GM10248 (cell line): ENCODE measurements at regions of chr11 and their contacts with region 1.

Region 1: DNA sequence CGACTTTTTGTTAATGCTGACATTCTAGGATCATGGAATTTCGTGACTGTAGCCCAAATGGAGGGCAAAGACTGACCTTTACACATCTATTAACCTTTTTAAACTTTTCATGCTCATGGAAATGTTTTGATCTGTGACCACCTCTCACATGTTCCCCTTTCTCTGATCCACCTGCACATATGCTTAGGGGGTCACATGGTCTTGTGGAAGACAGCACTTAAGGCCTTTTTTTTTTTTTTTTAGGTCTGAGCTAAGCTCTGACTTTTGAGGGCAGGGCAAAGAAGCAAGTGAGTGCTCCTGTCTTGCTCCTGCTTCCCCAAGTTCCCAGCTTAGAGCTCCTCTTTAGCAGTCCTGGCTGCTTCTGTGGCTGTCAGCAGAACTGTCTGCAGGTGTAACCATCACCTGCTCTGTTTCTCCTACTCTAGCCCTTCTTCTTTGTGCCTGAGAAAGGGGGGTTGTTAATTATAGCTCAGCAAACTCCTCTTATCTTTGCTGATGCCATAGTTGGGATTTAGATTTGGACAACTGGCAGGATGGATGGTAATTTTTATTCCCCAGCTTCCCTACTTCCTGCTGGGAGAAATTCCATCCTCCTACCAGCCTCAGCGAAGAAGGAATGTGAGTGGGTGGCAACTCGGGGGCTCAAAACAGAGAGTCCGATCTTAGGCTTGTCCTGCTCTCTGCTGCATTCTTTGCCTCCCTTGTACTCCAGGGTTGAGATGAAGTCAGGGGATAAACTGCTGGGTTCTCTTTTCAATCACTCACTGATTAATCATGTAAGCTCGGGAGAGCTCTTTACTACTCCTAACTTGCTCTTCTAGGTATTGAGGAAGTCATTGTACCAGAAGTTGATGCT is 64.4 kb downstream of the GRAMD1B start:
- DNase-seq: no peak
- CTCF ChIP-seq: no peak

Region 2: DNA sequence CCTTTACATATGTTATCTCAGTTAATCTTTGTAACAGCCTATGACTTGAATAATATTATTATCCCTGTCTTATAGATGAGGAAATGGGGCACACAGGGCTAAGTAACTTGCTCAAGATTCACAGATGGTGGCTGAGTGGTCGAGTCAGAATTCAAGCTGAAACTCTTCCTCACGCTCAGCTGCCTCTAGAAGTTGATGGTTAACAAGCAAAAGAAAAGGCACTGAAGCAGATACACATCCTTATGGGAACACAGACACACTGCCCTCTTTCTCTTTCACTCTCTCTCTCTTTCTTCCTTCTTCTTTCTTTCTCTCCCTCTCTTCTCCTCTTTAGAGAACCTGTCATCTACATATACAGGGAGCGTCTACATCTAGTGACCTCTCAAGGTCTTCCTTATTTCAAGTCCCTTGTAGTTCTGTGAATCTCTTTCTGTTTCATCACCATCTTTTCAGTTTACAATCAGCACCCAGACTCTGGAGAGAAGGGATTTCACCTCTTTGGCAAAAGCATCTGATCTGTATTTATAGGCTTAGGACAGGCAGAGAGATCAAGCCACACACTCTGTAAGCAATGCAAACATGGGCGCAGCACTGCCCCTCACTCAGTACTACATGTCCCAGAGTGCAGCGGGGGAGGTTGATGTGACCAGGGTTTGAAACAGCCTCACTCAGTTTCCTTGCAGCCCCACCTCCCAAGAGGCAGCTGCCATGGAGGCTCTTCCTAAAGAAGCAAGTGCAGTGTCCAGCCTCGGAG is 11.3 kb after region 1 on chr11:
- CTCF ChIA-PET with region 1: interaction called, 28 read pairs
- POLR2A ChIA-PET with region 1: no interaction called
- DNase-seq: no peak
- CTCF ChIP-seq: no peak

Region 3: DNA sequence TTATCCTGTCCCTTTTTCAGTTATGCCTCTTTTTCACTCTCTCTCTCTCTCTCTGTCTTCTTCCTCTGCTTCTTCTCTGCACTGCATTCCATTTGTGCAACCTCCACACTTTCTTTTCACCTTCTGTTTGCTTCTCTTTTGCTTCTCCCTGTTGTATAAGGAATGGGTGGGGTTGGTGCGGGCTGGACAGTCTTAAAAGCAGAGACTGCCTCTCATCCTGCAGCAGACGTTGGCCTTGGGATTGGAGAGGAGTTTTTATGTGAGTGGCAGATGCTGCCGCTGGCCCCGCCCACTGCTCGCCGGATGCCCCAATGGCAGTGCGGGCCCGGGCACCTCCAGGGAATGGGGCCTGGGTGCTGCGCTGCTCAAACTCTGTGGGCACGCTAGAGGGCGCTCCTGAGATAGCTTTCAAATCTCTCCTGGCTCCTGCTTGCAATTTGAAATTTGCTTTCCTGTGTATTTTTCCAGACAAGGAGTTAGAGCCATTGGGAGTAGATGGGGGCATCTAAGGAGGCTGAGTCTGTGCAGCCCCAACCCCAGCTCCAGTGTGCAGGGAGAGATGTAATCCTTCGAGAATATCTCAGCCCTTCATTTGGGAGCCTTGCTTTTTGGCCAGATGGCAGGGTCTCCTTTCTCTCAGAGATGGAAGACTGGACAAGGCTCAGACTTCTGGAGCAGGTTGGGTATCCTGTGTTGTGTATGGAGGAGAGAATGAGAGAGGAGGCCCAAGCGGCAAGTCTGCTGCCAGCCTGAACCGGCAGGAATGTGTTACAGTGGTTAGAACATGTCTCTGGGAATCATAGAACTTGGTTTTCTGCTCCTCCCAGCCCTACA is 16.8 kb after region 1 on chr11:
- CTCF ChIA-PET with region 1: interaction called, 28 read pairs
- POLR2A ChIA-PET with region 1: interaction called, 3 read pairs
- DNase-seq: peak; percentile 79
- CTCF ChIP-seq: peak; percentile 83